ENCODE measurements at regions of chr7 and their contacts with region 1.

Region 1: DNA sequence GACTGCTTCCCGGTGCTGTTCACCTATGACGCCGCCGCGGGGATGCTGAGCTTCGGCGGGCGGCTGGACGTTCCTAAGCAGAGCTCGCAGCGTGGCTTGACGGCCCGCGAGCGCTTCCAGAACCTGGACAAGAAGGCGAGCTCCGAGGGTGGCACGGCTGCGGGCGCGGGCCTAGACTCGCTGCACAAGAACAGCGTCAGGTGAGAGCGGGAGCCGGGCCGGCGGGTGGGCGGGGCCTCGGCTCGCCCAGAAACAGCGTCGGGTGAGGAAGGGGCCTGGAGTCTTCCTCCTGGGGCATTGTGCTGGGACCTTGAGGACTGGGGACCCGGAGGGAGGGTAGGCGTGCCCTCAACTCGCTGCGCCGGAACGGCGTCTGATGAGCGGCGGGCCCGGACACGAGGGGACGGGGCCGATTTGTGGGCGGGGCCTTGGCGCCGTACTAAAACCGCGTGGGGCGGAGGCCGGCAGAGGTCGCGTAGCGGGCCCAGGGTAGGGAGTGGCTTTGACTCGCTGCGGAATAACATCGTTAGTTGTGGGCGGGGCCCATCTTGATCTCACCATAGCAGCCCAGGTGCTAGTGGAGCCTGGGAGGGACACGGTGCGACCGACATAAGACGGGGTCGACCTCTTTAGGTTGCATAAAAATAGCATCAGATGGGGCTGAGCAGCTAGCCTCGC is 15.6 kb downstream of the PDAP1 start:
- DNase-seq: peak; percentile 79 to 90 (median 84)
- H3K4me3 ChIP-seq: peak overlapping the region; percentile 45
- H3K4me3 Mint-ChIP-seq: peak overlapping the region; percentile 77 to 94 (median 82)
- H3K27ac ChIP-seq: peak overlapping the region; percentile 57
- H3K27ac Mint-ChIP-seq: peak overlapping the region; percentile 89 to 97 (median 92)
- H3K4me1 ChIP-seq: peaks cover 15% of the 10 kb centered on the region
- H3K4me1 Mint-ChIP-seq: peaks cover 15 to 38% (median 16%) of the 10 kb centered on the region in 3 donors
- H3K27me3 ChIP-seq: no peaks in the 10 kb centered on the region
- H3K27me3 Mint-ChIP-seq: no peaks in the 10 kb centered on the region

Region 2: GRCh38 chr7:98870121-98870651 is 522.6 kb before region 1 on chr7:
- CTCF ChIA-PET with region 1: no interaction called
- POLR2A ChIA-PET with region 1: no interaction called
- DNase-seq: peak; percentile 18 to 65 (median 29)
- H3K4me3 ChIP-seq: no peak overlapping the region
- H3K4me3 Mint-ChIP-seq: peak overlapping the region; percentile 58 to 82 (median 70)
- H3K27ac ChIP-seq: no peak overlapping the region
- H3K27ac Mint-ChIP-seq: no peak overlapping the region
- H3K4me1 ChIP-seq: peaks cover 7% of the 10 kb centered on the region
- H3K4me1 Mint-ChIP-seq: peaks cover 0 to 13% (median 1%) of the 10 kb centered on the region in 3 donors
- H3K27me3 ChIP-seq: peaks cover 11% of the 10 kb centered on the region
- H3K27me3 Mint-ChIP-seq: peaks cover 12 to 19% of the 10 kb centered on the region in 2 donors

Region 3: GRCh38 chr7:99374103-99375064 is 18.4 kb before region 1 on chr7 and contains the start of gene ARPC1B:
- CTCF ChIA-PET with region 1: interaction called, 7 read pairs
- POLR2A ChIA-PET with region 1: interaction called, 28 read pairs
- DNase-seq: peak; percentile 80 to 90 (median 82)
- H3K4me3 ChIP-seq: peak within 1 kb of the TSS; percentile 83
- H3K4me3 Mint-ChIP-seq: peak within 1 kb of the TSS; percentile 77 to 92 (median 80)
- H3K27ac ChIP-seq: peak within 1 kb of the TSS; percentile 90
- H3K27ac Mint-ChIP-seq: peak within 1 kb of the TSS; percentile 68 to 98 (median 94)
- H3K4me1 ChIP-seq: peaks cover 38% of the 10 kb centered on the region
- H3K4me1 Mint-ChIP-seq: peaks cover 23 to 34% (median 26%) of the 10 kb centered on the region in 3 donors
- H3K27me3 ChIP-seq: no peaks in the 10 kb centered on the region
- H3K27me3 Mint-ChIP-seq: no peaks in the 10 kb centered on the region
- total RNA-seq, gene ARPC1B: 238 to 258 TPM

Region 4: GRCh38 chr7:99380032-99380822 is 12.6 kb before region 1 on chr7:
- CTCF ChIA-PET with region 1: interaction called, 7 read pairs
- POLR2A ChIA-PET with region 1: interaction called, 28 read pairs
- DNase-seq: peak; percentile 30 to 59 (median 39)
- H3K4me3 ChIP-seq: peak overlapping the region; percentile 58
- H3K4me3 Mint-ChIP-seq: peak overlapping the region; percentile 41 to 91 (median 87)
- H3K27ac ChIP-seq: peak overlapping the region; percentile 91
- H3K27ac Mint-ChIP-seq: peak overlapping the region; percentile 86 to 99 (median 98)
- H3K4me1 ChIP-seq: peaks cover 79% of the 10 kb centered on the region
- H3K4me1 Mint-ChIP-seq: peaks cover 50 to 66% (median 62%) of the 10 kb centered on the region in 3 donors
- H3K27me3 ChIP-seq: no peaks in the 10 kb centered on the region
- H3K27me3 Mint-ChIP-seq: no peaks in the 10 kb centered on the region

Region 5: GRCh38 chr7:99422625-99423024 is 29.8 kb after region 1 on chr7:
- CTCF ChIA-PET with region 1: no interaction called
- POLR2A ChIA-PET with region 1: no interaction called
- DNase-seq: no peak
- H3K4me3 ChIP-seq: no peak overlapping the region
- H3K4me3 Mint-ChIP-seq: no peak overlapping the region
- H3K27ac ChIP-seq: no peak overlapping the region
- H3K27ac Mint-ChIP-seq: peak overlapping the region in 3 of 8 donors; percentile 34 to 38 (median 35)
- H3K4me1 ChIP-seq: no peaks in the 10 kb centered on the region
- H3K4me1 Mint-ChIP-seq: no peaks in the 10 kb centered on the region
- H3K27me3 ChIP-seq: no peaks in the 10 kb centered on the region
- H3K27me3 Mint-ChIP-seq: no peaks in the 10 kb centered on the region

Region 6: GRCh38 chr7:99465421-99465768 is 72.6 kb after region 1 on chr7:
- CTCF ChIA-PET with region 1: no interaction called
- POLR2A ChIA-PET with region 1: no interaction called
- DNase-seq: no peak
- H3K4me3 ChIP-seq: peak overlapping the region; percentile 92
- H3K4me3 Mint-ChIP-seq: peak overlapping the region; percentile 93 to 97 (median 95)
- H3K27ac ChIP-seq: peak overlapping the region; percentile 84
- H3K27ac Mint-ChIP-seq: peak overlapping the region; percentile 76 to 98 (median 92)
- H3K4me1 ChIP-seq: peaks cover 21% of the 10 kb centered on the region
- H3K4me1 Mint-ChIP-seq: peaks cover 23 to 48% (median 38%) of the 10 kb centered on the region in 3 donors
- H3K27me3 ChIP-seq: no peaks in the 10 kb centered on the region
- H3K27me3 Mint-ChIP-seq: peaks cover 0 to 3% of the 10 kb centered on the region in 2 donors